HEK293 (cell line): ENCODE measurements at regions of chr1 and their contacts with region 1.

Region 1: DNA sequence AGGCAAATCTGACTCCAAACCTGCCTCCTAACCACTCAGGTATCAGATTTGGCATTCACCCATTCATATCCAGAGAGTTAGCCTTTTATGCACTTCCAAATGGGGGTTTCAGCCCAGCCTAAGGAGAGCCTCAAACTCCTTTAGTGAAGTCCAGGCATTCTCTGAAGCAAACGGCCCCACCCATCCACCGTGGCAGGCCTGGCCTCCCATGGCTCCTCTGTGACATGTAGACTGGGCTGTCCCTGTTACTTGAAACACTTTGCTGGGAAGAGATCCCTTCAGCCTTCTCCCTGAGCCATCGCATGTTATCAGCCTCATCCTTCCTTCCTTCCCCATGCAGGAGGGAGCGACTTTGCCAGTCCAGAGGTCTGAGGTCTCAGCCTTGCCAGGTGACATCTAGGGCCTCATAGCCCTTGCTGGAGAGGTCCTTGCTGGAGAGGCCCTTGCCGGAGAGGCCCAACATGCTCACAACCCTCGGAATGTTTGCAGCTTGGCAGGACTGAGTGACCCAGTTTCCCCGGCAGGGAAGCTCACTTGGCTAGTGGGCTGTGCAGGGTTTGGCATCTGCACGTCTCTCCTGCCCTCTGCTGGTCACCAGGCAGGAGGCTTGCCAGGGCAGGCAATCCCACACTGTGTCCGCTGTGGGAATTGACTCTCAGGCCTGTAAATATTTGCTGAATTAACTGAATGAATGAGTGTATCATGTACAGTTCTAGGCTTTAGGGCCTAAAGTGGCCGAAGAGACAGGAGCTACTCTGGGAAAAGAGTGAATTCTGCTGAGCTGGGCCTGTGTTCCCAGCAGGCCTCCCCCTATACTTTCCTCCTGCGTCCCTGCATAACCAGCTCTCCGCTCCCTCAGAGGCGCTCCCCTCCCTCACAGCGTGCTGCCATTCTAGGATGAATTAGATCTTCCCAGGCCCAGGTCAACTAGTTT is 26.7 kb upstream of the RBM15 start:
- H3K4me3 ChIP-seq: no peak overlapping the region
- H3K27ac ChIP-seq: no peak overlapping the region
- H3K4me1 ChIP-seq: no peaks in the 10 kb centered on the region
- CTCF ChIP-seq: peak; percentile 93

Region 2: DNA sequence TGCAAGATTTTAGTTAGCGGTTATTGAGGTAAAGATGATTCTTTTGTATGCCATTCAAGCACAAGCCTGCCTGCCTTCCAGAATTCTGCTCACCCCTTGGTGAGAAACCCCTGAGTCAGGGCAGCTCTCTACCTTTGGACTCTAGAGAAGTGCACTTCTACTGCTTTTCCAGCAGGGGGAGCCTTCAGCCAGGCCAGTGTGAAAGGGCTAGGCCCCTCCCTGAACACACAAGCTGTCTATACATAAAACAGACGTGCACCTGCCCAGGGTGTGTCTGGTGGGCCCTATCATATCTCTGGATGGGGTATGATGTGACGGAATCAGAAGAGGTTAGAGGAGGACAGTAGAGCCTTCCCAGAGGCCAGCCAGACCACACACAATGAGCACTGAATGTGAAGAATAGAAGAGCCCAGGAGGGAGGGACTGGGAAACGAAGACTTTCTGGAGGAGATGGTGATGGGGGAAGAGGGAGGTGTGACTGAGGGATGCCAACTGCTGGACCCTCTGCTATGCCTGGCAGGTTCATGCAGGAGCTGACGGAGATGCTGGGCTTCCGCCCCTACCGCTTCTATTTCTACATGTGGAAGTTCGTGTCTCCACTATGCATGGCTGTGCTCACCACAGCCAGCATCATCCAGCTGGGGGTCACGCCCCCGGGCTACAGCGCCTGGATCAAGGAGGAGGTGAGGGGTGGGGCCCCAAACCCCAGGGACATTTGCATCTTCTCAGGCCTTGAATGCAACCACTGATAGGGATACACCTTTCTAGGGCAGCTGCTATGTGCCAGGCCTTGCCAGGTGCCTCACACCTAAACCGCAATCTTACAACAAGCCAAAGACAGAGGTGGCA is 115.3 kb before region 1 on chr1:
- CTCF ChIA-PET with region 1: interaction called, 662 read pairs
- POLR2A ChIA-PET with region 1: no interaction called
- H3K4me3 ChIP-seq: no peak overlapping the region
- H3K27ac ChIP-seq: no peak overlapping the region
- H3K4me1 ChIP-seq: no peaks in the 10 kb centered on the region
- CTCF ChIP-seq: peak; percentile 63; the same call in 1 of the 2 replicates

Region 3: GRCh38 chr1:110218739-110219138 is 93.7 kb before region 1 on chr1:
- CTCF ChIA-PET with region 1: interaction called, 662 read pairs
- POLR2A ChIA-PET with region 1: no interaction called
- H3K4me3 ChIP-seq: no peak overlapping the region
- H3K27ac ChIP-seq: no peak overlapping the region
- H3K4me1 ChIP-seq: peaks cover 4% of the 10 kb centered on the region
- CTCF ChIP-seq: no peak

Region 4: DNA sequence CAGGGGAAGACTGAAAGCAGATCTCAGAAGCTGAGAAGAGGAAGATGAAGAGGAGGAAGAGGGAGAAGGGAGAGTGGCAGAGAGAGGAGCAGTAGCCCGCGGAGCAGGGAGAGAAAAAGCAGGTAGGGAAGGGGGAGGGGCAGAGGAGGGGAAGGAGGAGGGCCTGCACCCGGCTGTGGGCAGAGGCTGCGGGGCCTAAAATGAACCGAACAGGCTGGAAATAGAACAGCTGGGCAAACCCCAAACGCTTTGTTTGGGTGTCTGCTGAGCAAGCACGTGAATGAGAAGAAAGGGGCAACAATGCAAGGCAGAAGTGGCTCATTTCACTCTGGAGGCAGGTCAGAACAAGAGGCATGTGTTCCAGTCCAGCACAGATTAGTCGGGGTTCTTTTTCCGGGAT is 68.9 kb before region 1 on chr1:
- CTCF ChIA-PET with region 1: interaction called, 11 read pairs
- POLR2A ChIA-PET with region 1: no interaction called
- H3K4me3 ChIP-seq: no peak overlapping the region
- H3K27ac ChIP-seq: no peak overlapping the region
- H3K4me1 ChIP-seq: no peaks in the 10 kb centered on the region
- CTCF ChIP-seq: no peak

Region 5: GRCh38 chr1:110298991-110299390 is 13.5 kb before region 1 on chr1:
- CTCF ChIA-PET with region 1: interaction called, 10 read pairs
- POLR2A ChIA-PET with region 1: interaction called, 4 read pairs
- H3K4me3 ChIP-seq: no peak overlapping the region
- H3K27ac ChIP-seq: no peak overlapping the region
- H3K4me1 ChIP-seq: no peaks in the 10 kb centered on the region
- CTCF ChIP-seq: no peak

Region 6: DNA sequence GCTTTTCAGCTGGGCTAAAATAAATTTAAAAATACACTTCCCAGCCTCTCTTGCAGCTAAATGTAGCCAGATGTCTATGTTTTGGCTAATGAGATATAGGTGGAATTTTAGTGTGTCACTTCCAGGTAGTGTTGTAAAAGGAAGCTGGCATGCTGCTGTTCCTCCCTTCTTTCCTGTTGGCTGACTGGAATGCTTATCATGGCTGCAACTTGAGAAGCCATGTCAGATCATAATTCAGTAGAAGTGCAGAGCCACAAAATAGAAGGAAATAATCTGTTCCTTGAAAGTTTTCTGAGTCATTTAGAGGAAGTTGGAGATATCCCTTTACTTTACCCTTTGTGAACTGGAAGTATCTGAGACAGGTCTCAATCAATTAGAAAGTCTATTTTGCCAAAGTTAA is 15.8 kb after region 1 on chr1:
- CTCF ChIA-PET with region 1: interaction called, 21 read pairs
- POLR2A ChIA-PET with region 1: no interaction called
- H3K4me3 ChIP-seq: no peak overlapping the region
- H3K27ac ChIP-seq: no peak overlapping the region
- H3K4me1 ChIP-seq: no peaks in the 10 kb centered on the region
- CTCF ChIP-seq: no peak

Region 7: DNA sequence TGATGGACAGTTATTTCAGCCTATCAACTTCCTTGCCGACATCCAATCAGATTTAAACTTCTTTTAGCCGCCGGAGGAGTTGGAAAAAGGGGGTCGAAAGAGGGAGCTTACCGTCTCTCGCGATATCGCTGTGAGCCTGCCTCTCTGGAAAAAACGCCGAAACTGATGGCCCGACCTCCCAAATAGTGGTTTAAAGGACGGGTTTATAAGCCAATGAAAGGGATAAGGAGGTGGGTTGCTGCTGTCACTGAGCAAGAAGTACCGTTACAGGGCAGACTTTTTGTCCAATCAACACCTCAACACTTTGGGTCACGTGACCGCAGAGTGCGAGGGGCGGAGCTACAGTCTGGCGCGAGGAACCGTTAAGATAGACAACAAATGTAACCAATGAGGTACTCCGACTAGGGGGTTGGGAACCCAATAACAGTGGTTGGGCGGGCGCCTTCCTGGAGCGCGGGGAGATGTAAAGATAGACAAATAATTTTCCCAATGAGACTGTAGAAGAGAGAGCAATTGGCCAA is 26.5 kb after region 1 on chr1 and contains the start of gene RBM15:
- CTCF ChIA-PET with region 1: interaction called, 17 read pairs
- POLR2A ChIA-PET with region 1: interaction called, 9 read pairs
- H3K4me3 ChIP-seq: peak within 1 kb of the TSS; percentile 78
- H3K27ac ChIP-seq: peak within 1 kb of the TSS; percentile 88
- H3K4me1 ChIP-seq: peaks cover 13% of the 10 kb centered on the region
- CTCF ChIP-seq: no peak